Panc1 (cell line): ENCODE measurements at regions of chr18 and their contacts with region 1.

Region 1: DNA sequence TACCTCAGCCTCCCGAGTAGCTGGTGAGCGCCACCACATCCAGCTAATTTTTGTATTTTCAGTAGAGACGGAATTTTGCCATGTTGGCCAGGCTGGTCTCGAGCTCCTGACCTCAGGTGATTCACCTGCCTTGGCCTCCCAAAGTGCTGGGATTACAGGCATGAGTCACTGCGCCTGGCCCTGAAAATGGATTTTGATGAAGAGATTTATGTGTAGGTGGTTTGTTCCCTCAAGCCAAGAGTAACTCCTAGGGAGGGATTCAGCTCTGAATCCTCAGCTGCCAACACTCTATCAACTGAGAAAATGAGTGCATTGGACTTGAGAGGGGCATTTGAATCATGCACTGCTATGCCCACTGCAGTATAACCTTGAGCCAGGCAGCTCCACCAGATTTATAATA is 17.5 kb upstream of the LIPG start:
- DNase-seq: no peak
- ATAC-seq: no peak
- H3K4me3 ChIP-seq: no peak overlapping the region
- H3K27ac ChIP-seq: no peak overlapping the region
- H3K4me1 ChIP-seq: no peaks in the 10 kb centered on the region
- H3K27me3 ChIP-seq: no peaks in the 10 kb centered on the region
- CTCF ChIP-seq: no peak

Region 2: DNA sequence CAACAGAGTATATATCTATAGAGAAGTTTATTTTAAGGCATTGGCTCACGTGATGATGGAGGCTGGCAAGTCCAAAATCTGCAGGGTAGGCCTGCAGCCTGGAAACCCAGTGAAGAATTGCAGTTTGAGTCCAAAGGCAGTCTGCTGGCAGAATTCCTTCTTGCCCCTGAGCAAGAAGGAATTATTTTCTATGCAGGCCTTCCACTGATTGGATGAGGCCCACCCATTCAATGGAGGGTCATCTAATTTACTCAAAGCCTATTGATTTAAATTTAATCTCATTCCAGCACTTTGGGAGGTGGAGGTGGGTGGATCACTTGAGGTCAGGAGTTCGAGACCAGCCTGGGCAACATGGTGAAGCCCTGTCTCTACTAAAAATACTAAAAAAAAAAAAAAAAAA is 26.9 kb before region 1 on chr18:
- CTCF ChIA-PET with region 1: interaction called, 10 read pairs
- POLR2A ChIA-PET with region 1: no interaction called
- in situ Hi-C with region 1: no loop called
- intact Hi-C with region 1: no loop called
- DNase-seq: no peak
- ATAC-seq: no peak
- H3K4me3 ChIP-seq: no peak overlapping the region
- H3K27ac ChIP-seq: no peak overlapping the region
- H3K4me1 ChIP-seq: no peaks in the 10 kb centered on the region; the same call in 1 of the 2 replicates
- H3K27me3 ChIP-seq: no peaks in the 10 kb centered on the region
- CTCF ChIP-seq: no peak